ENCODE measurements at regions of chr19 and their contacts with region 1.

Region 1: GRCh38 chr19:3774621-3775373 is 2.8 kb upstream of the RAX2 start:
- DNase-seq: no peak
- H3K4me3 ChIP-seq: no peak overlapping the region
- H3K27ac ChIP-seq: no peak overlapping the region
- H3K4me1 ChIP-seq: no peaks in the 10 kb centered on the region
- H3K27me3 ChIP-seq: no peaks in the 10 kb centered on the region
- CTCF ChIP-seq: no peak

Region 2: DNA sequence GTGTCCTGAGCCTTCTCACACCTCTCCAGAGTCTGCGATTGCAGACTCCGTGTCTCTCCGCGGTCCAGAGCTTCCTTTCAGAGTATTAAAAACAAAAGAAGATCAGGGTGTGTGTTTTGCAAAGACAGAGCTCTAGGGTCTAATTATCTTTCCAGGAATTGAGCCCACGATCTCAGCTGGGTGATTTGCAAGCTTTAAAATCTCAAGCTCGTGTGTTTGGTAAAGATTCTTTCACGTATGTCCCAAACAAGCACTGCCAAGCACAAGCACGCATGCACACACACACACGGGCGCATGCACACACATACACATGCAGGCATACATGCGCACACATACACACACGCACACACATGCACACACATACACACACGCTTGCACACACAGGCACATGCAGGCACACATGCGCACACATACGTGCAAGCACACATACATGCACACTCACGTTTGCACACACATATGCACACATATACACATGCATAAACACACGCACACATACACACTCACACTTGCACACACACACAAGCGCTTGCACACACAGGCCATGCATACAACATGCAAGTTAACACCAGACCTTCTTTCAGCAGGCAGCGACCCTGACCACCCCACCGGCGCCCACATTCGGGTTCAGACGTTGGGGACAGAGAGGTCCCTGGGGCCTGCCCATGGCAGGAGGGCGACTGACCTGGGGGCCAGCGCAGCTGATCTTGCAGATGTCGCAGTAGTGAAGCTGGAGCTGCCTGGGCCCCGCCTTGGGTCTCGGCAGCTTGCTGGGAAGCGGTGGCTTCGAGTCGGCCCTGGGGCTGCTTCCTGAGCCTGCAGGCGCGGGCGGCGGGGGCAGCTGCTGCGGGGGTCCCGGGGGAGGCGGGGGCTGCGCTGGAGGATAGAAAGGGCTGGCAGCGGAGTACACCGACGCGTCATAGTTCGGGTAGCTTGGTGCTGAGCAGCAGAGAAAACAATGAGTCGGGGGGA is 56.1 kb after region 1 on chr19:
- CTCF ChIA-PET with region 1: no interaction called
- dilution Hi-C with region 1: loop called (anchors 5 kb)
- in situ Hi-C with region 1: no loop called
- intact Hi-C with region 1: no loop called
- DNase-seq: no peak
- H3K4me3 ChIP-seq: no peak overlapping the region
- H3K27ac ChIP-seq: no peak overlapping the region
- H3K4me1 ChIP-seq: peaks cover 3% of the 10 kb centered on the region
- H3K27me3 ChIP-seq: peaks cover under 1% of the 10 kb centered on the region
- CTCF ChIP-seq: no peak

Measured in mammary epithelial cell (primary cell).